WTC11 (cell line): ENCODE measurements at regions of chr19 and their contacts with region 1.

Region 1: DNA sequence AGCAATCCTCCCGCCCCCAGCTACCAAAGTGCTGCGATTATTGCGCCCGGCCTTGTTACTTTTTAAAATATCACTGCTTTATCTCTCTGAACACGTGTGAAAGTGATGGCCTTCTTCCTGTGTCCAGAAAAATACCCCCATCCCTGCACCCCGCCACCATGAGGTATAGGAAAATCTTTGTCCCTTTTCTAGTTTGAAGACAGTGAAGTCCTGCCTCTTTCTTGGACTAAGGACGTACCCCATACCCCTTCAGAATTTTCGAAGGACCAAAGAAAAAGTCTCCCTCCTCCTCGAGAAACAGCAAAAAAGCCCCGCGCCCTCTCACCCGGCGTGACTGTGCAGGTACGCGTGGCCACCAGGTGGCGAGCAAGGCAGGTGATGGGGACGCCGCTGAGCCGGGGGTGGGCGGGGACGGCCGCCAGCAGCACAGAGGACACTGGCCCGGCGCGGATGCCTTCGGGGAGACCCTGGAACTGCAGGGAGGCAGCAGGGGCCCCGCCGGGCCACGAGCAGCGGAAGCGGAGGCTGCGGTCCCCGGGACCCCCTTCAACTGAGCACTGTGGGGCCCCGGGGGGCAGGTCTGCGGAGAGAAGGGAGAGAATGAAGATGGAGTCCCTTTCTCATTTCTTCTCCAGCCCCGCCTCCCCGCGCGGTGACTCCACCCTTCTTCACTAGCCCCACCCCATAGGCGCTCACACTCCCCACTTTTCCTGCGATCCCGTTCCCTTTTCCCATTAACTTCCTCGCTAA is 3.2 kb downstream of the VSIG10L start:
- DNase-seq: peak; percentile 91
- ATAC-seq: peak; percentile 50
- H3K4me3 Mint-ChIP-seq: peak overlapping the region; percentile 89
- H3K27ac Mint-ChIP-seq: peak overlapping the region; percentile 98
- H3K4me1 Mint-ChIP-seq: peaks cover 32% of the 10 kb centered on the region
- H3K27me3 Mint-ChIP-seq: peaks cover 26% of the 10 kb centered on the region
- CTCF ChIP-seq: peak; percentile 69

Region 2: GRCh38 chr19:51136851-51137551 is 201.7 kb before region 1 on chr19:
- CTCF ChIA-PET with region 1: no interaction called
- POLR2A ChIA-PET with region 1: no interaction called
- DNase-seq: no peak
- ATAC-seq: no peak
- H3K4me3 Mint-ChIP-seq: no peak overlapping the region
- H3K27ac Mint-ChIP-seq: no peak overlapping the region
- H3K4me1 Mint-ChIP-seq: peaks cover 28% of the 10 kb centered on the region
- H3K27me3 Mint-ChIP-seq: peaks cover 9% of the 10 kb centered on the region
- CTCF ChIP-seq: no peak

Region 3: DNA sequence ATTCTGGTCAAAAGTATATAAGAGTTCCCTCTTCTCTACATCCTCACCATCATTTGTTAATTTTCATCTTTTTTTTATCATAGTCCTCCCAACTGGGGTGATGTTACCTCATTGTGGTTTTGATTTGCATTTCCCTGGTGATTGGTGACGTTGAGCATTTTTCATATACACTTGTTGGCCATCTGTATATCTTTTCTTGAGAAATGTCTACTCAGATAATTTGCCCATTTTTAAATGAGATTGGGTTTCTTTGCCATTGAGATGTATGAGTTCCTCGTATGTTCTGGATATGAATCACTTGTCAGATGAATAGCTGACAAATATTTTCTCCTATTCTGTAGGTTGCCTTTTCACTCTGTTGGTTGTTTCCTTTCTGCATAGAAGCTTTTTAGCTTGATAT is 111.4 kb before region 1 on chr19:
- CTCF ChIA-PET with region 1: no interaction called
- POLR2A ChIA-PET with region 1: no interaction called
- DNase-seq: no peak
- ATAC-seq: no peak
- H3K4me3 Mint-ChIP-seq: no peak overlapping the region
- H3K27ac Mint-ChIP-seq: no peak overlapping the region
- H3K4me1 Mint-ChIP-seq: no peaks in the 10 kb centered on the region
- H3K27me3 Mint-ChIP-seq: peaks cover 44% of the 10 kb centered on the region
- CTCF ChIP-seq: no peak

Region 4: GRCh38 chr19:51282335-51282734 is 56.4 kb before region 1 on chr19:
- CTCF ChIA-PET with region 1: no interaction called
- POLR2A ChIA-PET with region 1: no interaction called
- DNase-seq: no peak
- ATAC-seq: no peak
- H3K4me3 Mint-ChIP-seq: no peak overlapping the region
- H3K27ac Mint-ChIP-seq: no peak overlapping the region
- H3K4me1 Mint-ChIP-seq: no peaks in the 10 kb centered on the region
- H3K27me3 Mint-ChIP-seq: peaks cover 53% of the 10 kb centered on the region
- CTCF ChIP-seq: no peak

Region 5: GRCh38 chr19:51296336-51297093 is 42.2 kb before region 1 on chr19:
- CTCF ChIA-PET with region 1: interaction called, 18 read pairs
- POLR2A ChIA-PET with region 1: no interaction called
- DNase-seq: peak; percentile 42
- ATAC-seq: peak; percentile 61
- H3K4me3 Mint-ChIP-seq: no peak overlapping the region
- H3K27ac Mint-ChIP-seq: no peak overlapping the region
- H3K4me1 Mint-ChIP-seq: peaks cover 57% of the 10 kb centered on the region
- H3K27me3 Mint-ChIP-seq: peaks cover 5% of the 10 kb centered on the region; the same call in 1 of the 2 replicates
- CTCF ChIP-seq: no peak

Region 6: DNA sequence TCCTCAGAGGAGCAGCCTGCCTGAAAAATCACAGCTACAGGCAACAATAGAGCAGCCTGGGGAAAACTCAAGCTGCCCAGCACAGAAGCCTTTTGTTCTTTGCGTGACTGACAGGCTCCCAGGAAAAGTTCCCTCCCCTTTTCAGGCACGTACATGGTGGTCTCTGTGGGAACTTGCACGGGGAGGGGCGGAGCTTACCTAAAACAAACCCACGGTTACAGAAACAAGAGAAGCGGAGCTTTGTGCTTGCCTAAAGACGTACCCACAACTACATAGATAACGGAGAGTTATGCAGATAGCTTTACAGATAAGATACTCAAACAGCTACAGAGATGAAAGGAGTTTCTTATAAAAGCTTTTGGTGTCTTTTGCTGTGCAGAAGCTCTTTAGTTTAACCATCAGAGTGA is 16.0 kb after region 1 on chr19:
- CTCF ChIA-PET with region 1: interaction called, 10 read pairs
- POLR2A ChIA-PET with region 1: no interaction called
- DNase-seq: peak; percentile 60
- ATAC-seq: peak; percentile 93
- H3K4me3 Mint-ChIP-seq: no peak overlapping the region
- H3K27ac Mint-ChIP-seq: peak overlapping the region; percentile 34
- H3K4me1 Mint-ChIP-seq: peaks cover 15% of the 10 kb centered on the region
- H3K27me3 Mint-ChIP-seq: no peaks in the 10 kb centered on the region
- CTCF ChIP-seq: no peak

Region 7: GRCh38 chr19:51380379-51380778 is 41.6 kb after region 1 on chr19:
- CTCF ChIA-PET with region 1: no interaction called
- POLR2A ChIA-PET with region 1: no interaction called
- DNase-seq: no peak
- ATAC-seq: no peak
- H3K4me3 Mint-ChIP-seq: no peak overlapping the region
- H3K27ac Mint-ChIP-seq: no peak overlapping the region
- H3K4me1 Mint-ChIP-seq: peaks cover under 1% of the 10 kb centered on the region
- H3K27me3 Mint-ChIP-seq: peaks cover 12% of the 10 kb centered on the region
- CTCF ChIP-seq: no peak

Region 8: GRCh38 chr19:51393959-51394836 is 55.5 kb after region 1 on chr19:
- CTCF ChIA-PET with region 1: interaction called, 14 read pairs
- POLR2A ChIA-PET with region 1: interaction called, 4 read pairs
- DNase-seq: peak; percentile 98
- ATAC-seq: peak; percentile 92
- H3K4me3 Mint-ChIP-seq: peak overlapping the region; percentile 94
- H3K27ac Mint-ChIP-seq: peak overlapping the region; percentile 99
- H3K4me1 Mint-ChIP-seq: peaks cover 46% of the 10 kb centered on the region
- H3K27me3 Mint-ChIP-seq: no peaks in the 10 kb centered on the region
- CTCF ChIP-seq: no peak

Region 9: DNA sequence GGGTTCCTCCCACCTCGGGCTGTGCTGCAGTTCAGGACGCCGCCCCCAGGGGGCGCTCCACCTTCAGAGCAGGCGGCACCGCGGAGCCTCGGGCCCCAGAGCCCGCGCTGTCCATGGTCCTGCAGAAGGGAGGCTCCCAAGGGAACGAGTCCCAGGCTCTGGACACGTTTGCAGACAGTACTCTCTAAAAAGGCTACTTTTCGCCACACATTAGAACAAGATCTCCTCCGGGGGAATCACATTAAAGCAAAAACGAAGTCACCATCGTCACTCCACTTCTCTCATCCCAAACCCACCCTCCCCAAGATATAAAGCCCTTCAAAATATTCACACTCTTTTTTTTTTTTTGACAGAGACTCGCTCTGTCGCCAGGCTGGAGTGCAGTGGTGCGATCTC is 83.3 kb after region 1 on chr19:
- CTCF ChIA-PET with region 1: interaction called, 37 read pairs
- POLR2A ChIA-PET with region 1: interaction called, 5 read pairs
- DNase-seq: peak; percentile 97
- ATAC-seq: peak; percentile 86
- H3K4me3 Mint-ChIP-seq: peak overlapping the region; percentile 59
- H3K27ac Mint-ChIP-seq: no peak overlapping the region
- H3K4me1 Mint-ChIP-seq: peaks cover 5% of the 10 kb centered on the region; the same call in 1 of the 2 replicates
- H3K27me3 Mint-ChIP-seq: peaks cover 55% of the 10 kb centered on the region
- CTCF ChIP-seq: peak; percentile 100